Activated CD4-positive, alpha-beta T cell treated with anti-CD3 and anti-CD28 coated beads, Interleukin-2, amount 10 ng/mL, durations not matched to agents 24 days and 14 days (primary cell): ENCODE measurements at regions of chr2 and their contacts with region 1.

Region 1: GRCh38 chr2:161954103-161954502 is 119.9 kb downstream of the DPP4 start:
- DNase-seq: peak; percentile 78
- H3K4me3 Mint-ChIP-seq: peak overlapping the region; percentile 50
- H3K27ac Mint-ChIP-seq: peak overlapping the region; percentile 86
- H3K4me1 Mint-ChIP-seq: peaks cover 57% of the 10 kb centered on the region
- H3K27me3 Mint-ChIP-seq: no peaks in the 10 kb centered on the region

Region 2: DNA sequence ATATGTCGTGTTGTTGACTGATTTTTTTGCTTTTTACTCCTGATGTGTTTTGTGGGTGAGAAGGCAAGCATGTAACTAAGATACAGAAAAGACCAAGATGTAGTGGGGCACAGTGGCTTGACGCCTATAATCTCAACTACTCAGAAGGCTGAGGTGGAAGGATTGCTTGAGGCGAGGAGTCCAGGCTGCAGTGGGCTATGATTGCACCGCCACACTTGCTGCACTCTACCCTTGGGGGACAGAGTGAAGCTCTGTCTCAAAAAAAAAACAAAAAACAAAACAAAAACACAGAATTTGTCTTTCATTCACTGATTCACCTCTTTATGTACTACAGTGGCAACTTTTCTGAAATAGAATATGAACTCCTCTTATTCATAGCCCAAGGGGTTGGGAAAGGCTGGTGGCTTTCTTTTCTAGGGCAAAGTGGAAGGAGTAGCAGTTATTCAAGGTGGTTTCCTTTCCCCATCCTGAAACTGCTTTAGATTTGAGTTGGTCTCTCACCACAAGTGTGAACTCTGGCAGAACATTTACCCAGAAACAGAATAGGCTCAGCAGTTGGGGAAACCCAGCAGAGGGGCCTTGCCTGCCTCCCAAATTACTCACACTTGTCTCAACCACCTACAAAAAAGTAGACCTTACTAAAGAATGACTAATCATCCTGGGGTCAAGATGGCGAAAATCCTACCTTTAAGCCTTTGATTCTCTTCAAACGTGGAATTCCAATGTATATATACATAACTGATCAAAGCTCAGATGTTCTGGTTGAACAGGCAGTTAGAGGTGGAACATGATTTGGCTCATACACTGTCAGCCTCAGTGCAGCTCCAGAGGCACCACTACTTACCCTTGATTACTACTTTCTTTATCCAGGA is 787.3 kb before region 1 on chr2:
- intact Hi-C with region 1: loop called (anchors 5 kb)
- DNase-seq: peak; percentile 90
- H3K4me3 Mint-ChIP-seq: peak overlapping the region; percentile 69
- H3K27ac Mint-ChIP-seq: peak overlapping the region; percentile 94
- H3K4me1 Mint-ChIP-seq: peaks cover 76% of the 10 kb centered on the region
- H3K27me3 Mint-ChIP-seq: no peaks in the 10 kb centered on the region

Region 3: GRCh38 chr2:161308178-161308955 is 645.7 kb before region 1 on chr2 and contains the start of gene PSMD14:
- intact Hi-C with region 1: loop called (anchors 2 kb)
- DNase-seq: peak; percentile 97
- H3K4me3 Mint-ChIP-seq: peak within 1 kb of the TSS; percentile 99
- H3K27ac Mint-ChIP-seq: peak within 1 kb of the TSS; percentile 97
- H3K4me1 Mint-ChIP-seq: peaks cover 33% of the 10 kb centered on the region
- H3K27me3 Mint-ChIP-seq: peaks cover 11% of the 10 kb centered on the region
- total RNA-seq, gene PSMD14: 111 and 113 TPM in 2 replicates

Region 4: GRCh38 chr2:161981679-161982250 is 27.7 kb after region 1 on chr2:
- intact Hi-C with region 1: loop called (anchors 1 kb)
- DNase-seq: no peak
- H3K4me3 Mint-ChIP-seq: no peak overlapping the region
- H3K27ac Mint-ChIP-seq: peak overlapping the region; percentile 78
- H3K4me1 Mint-ChIP-seq: peaks cover 46% of the 10 kb centered on the region
- H3K27me3 Mint-ChIP-seq: no peaks in the 10 kb centered on the region

Region 5: GRCh38 chr2:162013514-162014475 is 59.7 kb after region 1 on chr2:
- intact Hi-C with region 1: loop called (anchors 1 kb)
- DNase-seq: peak; percentile 66
- H3K4me3 Mint-ChIP-seq: peak overlapping the region; percentile 78
- H3K27ac Mint-ChIP-seq: peak overlapping the region; percentile 95
- H3K4me1 Mint-ChIP-seq: peaks cover 73% of the 10 kb centered on the region
- H3K27me3 Mint-ChIP-seq: no peaks in the 10 kb centered on the region

Region 6: GRCh38 chr2:162318328-162319180 is 364.5 kb after region 1 on chr2 and contains the start of gene IFIH1:
- intact Hi-C with region 1: loop called (anchors 5 kb)
- DNase-seq: peak; percentile 95
- H3K4me3 Mint-ChIP-seq: peak within 1 kb of the TSS; percentile 87
- H3K27ac Mint-ChIP-seq: peak within 1 kb of the TSS; percentile 93
- H3K4me1 Mint-ChIP-seq: peaks cover 54% of the 10 kb centered on the region
- H3K27me3 Mint-ChIP-seq: no peaks in the 10 kb centered on the region
- total RNA-seq, gene IFIH1: 22.5 and 26.3 TPM in 2 replicates